ENCODE measurements at regions of chr2 and their contacts with region 1.

Region 1: GRCh38 chr2:217434181-217434975 is 568.4 kb downstream of the TNS1 start:
- DNase-seq: peak; percentile 84
- ATAC-seq: peak; percentile 99
- H3K4me3 ChIP-seq: no peak overlapping the region
- H3K27ac ChIP-seq: no peak overlapping the region
- H3K4me1 ChIP-seq: peaks cover 11% of the 10 kb centered on the region
- H3K27me3 ChIP-seq: no peaks in the 10 kb centered on the region
- CTCF ChIP-seq: no peak

Region 2: DNA sequence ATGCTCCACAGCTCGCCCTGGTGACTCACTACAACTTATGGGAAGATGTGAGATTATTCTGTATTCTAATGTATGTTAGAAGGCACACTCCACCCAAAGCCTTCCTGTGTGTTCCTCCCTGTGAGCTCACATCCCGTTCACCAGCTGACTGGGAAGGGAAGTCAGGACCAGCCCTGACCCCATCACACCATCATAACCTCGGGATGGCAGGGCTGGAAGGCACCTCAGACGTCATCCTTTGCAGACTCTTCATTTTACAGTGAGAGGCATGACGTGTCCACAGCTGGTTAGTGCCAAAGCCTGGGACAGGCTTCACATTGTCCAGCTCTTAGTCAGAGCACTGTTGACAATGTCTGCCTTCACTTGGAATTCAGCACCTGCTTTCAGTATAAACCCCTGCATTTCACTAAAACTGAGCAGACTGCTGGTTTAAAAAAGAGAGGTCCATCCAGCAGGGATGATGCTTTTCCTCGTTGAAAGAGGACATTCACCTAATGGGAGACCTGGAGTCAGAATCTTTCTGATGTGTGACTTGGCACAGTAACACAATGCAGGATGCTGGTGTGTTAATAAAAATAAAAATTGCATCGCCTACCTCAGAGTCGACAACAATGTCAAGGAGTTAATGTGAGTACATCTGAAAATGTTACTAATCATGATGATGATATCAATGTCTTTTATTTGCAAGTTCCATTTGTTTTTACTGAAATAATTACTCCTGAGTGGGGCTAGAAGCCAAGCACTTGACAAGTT is 156.6 kb before region 1 on chr2:
- CTCF ChIA-PET with region 1: no interaction called
- POLR2A ChIA-PET with region 1: interaction called, 3 read pairs
- intact Hi-C with region 1: loop called (anchors 2 kb)
- DNase-seq: peak; percentile 96
- ATAC-seq: peak; percentile 72
- H3K4me3 ChIP-seq: no peak overlapping the region
- H3K27ac ChIP-seq: peak overlapping the region; percentile 94
- H3K4me1 ChIP-seq: peaks cover 50% of the 10 kb centered on the region
- H3K27me3 ChIP-seq: no peaks in the 10 kb centered on the region
- CTCF ChIP-seq: no peak

Region 3: GRCh38 chr2:217729421-217730053 is 295.2 kb after region 1 on chr2:
- CTCF ChIA-PET with region 1: no interaction called
- POLR2A ChIA-PET with region 1: no interaction called
- intact Hi-C with region 1: no loop called
- DNase-seq: no peak
- ATAC-seq: no peak
- H3K4me3 ChIP-seq: no peak overlapping the region
- H3K27ac ChIP-seq: no peak overlapping the region
- H3K4me1 ChIP-seq: no peaks in the 10 kb centered on the region
- H3K27me3 ChIP-seq: peaks cover 34% of the 10 kb centered on the region; the same call in 1 of the 2 replicates
- CTCF ChIP-seq: no peak